Caco-2 (cell line): ENCODE measurements at regions of chr4 and their contacts with region 1.

Region 1: GRCh38 chr4:114563536-114564315 is 34.9 kb upstream of the UGT8 start:
- DNase-seq: peak; percentile 65 to 84
- H3K4me3 ChIP-seq: no peak overlapping the region; the same call in 1 of the 2 replicates
- H3K4me3 Mint-ChIP-seq: peak overlapping the region; percentile 52
- H3K27ac Mint-ChIP-seq: peak overlapping the region; percentile 76
- H3K4me1 ChIP-seq: peaks cover 38% of the 10 kb centered on the region
- H3K4me1 Mint-ChIP-seq: peaks cover 15% of the 10 kb centered on the region
- H3K27me3 ChIP-seq: no peaks in the 10 kb centered on the region
- H3K27me3 Mint-ChIP-seq: no peaks in the 10 kb centered on the region
- CTCF ChIP-seq: no peak

Region 2: DNA sequence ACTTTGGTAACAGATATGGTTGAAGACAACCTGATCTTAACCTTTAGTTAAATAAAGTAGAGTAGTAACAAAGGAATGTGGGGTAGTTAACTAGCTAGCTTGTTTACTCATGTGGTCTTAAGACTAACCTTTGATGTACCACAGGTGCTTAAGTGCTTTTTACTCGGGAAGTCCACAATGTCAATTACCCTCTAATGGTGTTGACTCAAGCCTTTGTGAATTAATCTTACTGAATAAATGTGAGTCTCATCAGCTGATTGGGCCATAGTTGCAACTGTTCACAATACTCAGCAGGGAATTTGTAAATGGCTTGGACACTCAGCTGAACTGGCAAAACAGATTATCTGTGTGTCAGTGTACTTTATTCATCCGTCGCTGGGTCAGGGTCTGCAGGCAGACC is 84.1 kb before region 1 on chr4:
- CTCF ChIA-PET with region 1: no interaction called
- POLR2A ChIA-PET with region 1: no interaction called
- intact Hi-C with region 1: loop called (anchors 1 kb)
- DNase-seq: peak in 1 of 2 experiments; percentile 22
- H3K4me3 ChIP-seq: no peak overlapping the region
- H3K4me3 Mint-ChIP-seq: peak overlapping the region; percentile 32
- H3K27ac Mint-ChIP-seq: peak overlapping the region; percentile 64
- H3K4me1 ChIP-seq: peaks cover 15% of the 10 kb centered on the region
- H3K4me1 Mint-ChIP-seq: peaks cover 21% of the 10 kb centered on the region
- H3K27me3 ChIP-seq: no peaks in the 10 kb centered on the region
- H3K27me3 Mint-ChIP-seq: no peaks in the 10 kb centered on the region
- CTCF ChIP-seq: no peak

Region 3: GRCh38 chr4:114509340-114509739 is 54.4 kb before region 1 on chr4:
- CTCF ChIA-PET with region 1: no interaction called
- POLR2A ChIA-PET with region 1: no interaction called
- intact Hi-C with region 1: loop called (anchors 1 kb)
- DNase-seq: no peak
- H3K4me3 ChIP-seq: no peak overlapping the region
- H3K4me3 Mint-ChIP-seq: no peak overlapping the region
- H3K27ac Mint-ChIP-seq: no peak overlapping the region
- H3K4me1 ChIP-seq: peaks cover 14% of the 10 kb centered on the region
- H3K4me1 Mint-ChIP-seq: peaks cover 8% of the 10 kb centered on the region
- H3K27me3 ChIP-seq: no peaks in the 10 kb centered on the region
- H3K27me3 Mint-ChIP-seq: no peaks in the 10 kb centered on the region
- CTCF ChIP-seq: no peak

Region 4: GRCh38 chr4:114582621-114583020 is 18.9 kb after region 1 on chr4:
- CTCF ChIA-PET with region 1: no interaction called
- POLR2A ChIA-PET with region 1: no interaction called
- intact Hi-C with region 1: loop called (anchors 1 kb)
- DNase-seq: peak in 1 of 2 experiments; percentile 21
- H3K4me3 ChIP-seq: no peak overlapping the region
- H3K4me3 Mint-ChIP-seq: no peak overlapping the region
- H3K27ac Mint-ChIP-seq: no peak overlapping the region
- H3K4me1 ChIP-seq: peaks cover 16% of the 10 kb centered on the region
- H3K4me1 Mint-ChIP-seq: no peaks in the 10 kb centered on the region
- H3K27me3 ChIP-seq: no peaks in the 10 kb centered on the region
- H3K27me3 Mint-ChIP-seq: no peaks in the 10 kb centered on the region
- CTCF ChIP-seq: no peak

Region 5: GRCh38 chr4:114598191-114599121 is 34.7 kb after region 1 on chr4 and contains the start of gene UGT8:
- CTCF ChIA-PET with region 1: interaction called, 3 read pairs
- POLR2A ChIA-PET with region 1: interaction called, 3 read pairs
- intact Hi-C with region 1: loop called (anchors 1 kb)
- DNase-seq: peak; percentile 70 to 75
- H3K4me3 ChIP-seq: peak within 1 kb of the TSS; percentile 77
- H3K4me3 Mint-ChIP-seq: peak within 1 kb of the TSS; percentile 96
- H3K27ac Mint-ChIP-seq: peak within 1 kb of the TSS; percentile 52
- H3K4me1 ChIP-seq: 0 out of 2 replicates have a peak, but pooled peaks cover 3% of the 10 kb centered on the region
- H3K4me1 Mint-ChIP-seq: peaks cover 8% of the 10 kb centered on the region
- H3K27me3 ChIP-seq: no peaks in the 10 kb centered on the region
- H3K27me3 Mint-ChIP-seq: peaks cover 4% of the 10 kb centered on the region
- CTCF ChIP-seq: no peak
- total RNA-seq, gene UGT8: 11.9 and 14.8 TPM in 2 replicates